A673 (cell line): ENCODE measurements at regions of chr3 and their contacts with region 1.

Region 1: GRCh38 chr3:27312044-27312668 is 57.0 kb downstream of the NEK10 start:
- DNase-seq: peak; percentile 72
- H3K4me3 ChIP-seq: no peak overlapping the region
- H3K27ac ChIP-seq: no peak overlapping the region
- H3K4me1 ChIP-seq: no peaks in the 10 kb centered on the region
- H3K27me3 ChIP-seq: no peaks in the 10 kb centered on the region
- CTCF ChIP-seq: peak; percentile 78

Region 2: DNA sequence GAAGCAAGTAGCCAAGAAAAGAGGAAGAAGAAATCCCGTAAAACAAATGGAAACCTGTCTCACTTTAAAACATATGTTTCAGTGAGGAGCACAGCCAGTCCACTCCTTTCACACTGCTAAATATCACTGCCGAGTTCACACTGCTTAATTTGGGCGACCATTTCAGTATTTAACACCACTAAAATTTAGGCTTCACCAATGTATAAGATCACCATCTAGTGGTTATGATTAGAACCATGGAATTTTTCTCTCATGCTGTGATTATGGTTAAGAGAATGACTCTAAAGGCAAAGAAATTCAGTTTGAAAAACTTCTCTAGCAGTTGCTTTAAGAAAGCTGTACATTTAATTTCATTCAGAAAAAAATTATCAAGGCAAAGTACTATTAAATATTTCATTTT is 155.4 kb after region 1 on chr3:
- CTCF ChIA-PET with region 1: no interaction called
- POLR2A ChIA-PET with region 1: no interaction called
- intact Hi-C with region 1: loop called (anchors 2 kb)
- DNase-seq: peak; percentile 78
- H3K4me3 ChIP-seq: no peak overlapping the region
- H3K27ac ChIP-seq: no peak overlapping the region
- H3K4me1 ChIP-seq: peaks cover 4% of the 10 kb centered on the region
- H3K27me3 ChIP-seq: no peaks in the 10 kb centered on the region
- CTCF ChIP-seq: peak; percentile 73

Region 3: GRCh38 chr3:27659279-27660021 is 347.3 kb after region 1 on chr3:
- CTCF ChIA-PET with region 1: no interaction called
- POLR2A ChIA-PET with region 1: no interaction called
- intact Hi-C with region 1: loop called (anchors 1 kb)
- DNase-seq: peak; percentile 61
- H3K4me3 ChIP-seq: no peak overlapping the region
- H3K27ac ChIP-seq: no peak overlapping the region
- H3K4me1 ChIP-seq: no peaks in the 10 kb centered on the region
- H3K27me3 ChIP-seq: no peaks in the 10 kb centered on the region
- CTCF ChIP-seq: peak; percentile 79

Region 4: DNA sequence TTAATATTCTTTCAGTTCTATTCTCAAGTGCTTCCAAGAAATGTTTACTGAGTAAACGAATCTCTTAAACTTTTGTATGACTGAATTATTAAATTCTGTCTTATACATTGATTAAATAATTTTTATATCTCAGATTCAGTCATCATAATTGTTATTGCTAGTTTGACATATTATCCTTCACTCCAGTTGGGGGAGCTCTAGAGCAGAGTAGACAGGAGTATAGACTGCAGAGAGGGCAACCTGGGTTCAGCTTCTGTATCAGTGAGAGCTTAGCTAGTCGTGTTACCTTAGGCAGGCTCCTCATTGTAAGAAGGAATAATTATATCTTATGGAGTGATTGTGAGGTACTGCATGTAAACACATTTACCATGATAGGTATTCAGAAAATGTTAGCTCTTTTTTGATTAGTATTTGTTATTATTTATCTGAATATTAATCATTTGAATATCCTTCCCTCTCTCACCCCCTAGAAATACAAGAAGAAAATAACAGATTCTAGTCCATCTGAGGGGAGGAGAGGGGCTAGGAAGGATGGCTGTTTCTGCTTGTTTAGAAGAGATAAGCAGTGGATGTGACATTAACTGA is 1005.4 kb after region 1 on chr3:
- CTCF ChIA-PET with region 1: no interaction called
- POLR2A ChIA-PET with region 1: no interaction called
- intact Hi-C with region 1: loop called (anchors 10 kb)
- DNase-seq: peak; percentile 71
- H3K4me3 ChIP-seq: no peak overlapping the region
- H3K27ac ChIP-seq: no peak overlapping the region
- H3K4me1 ChIP-seq: no peaks in the 10 kb centered on the region
- H3K27me3 ChIP-seq: no peaks in the 10 kb centered on the region
- CTCF ChIP-seq: peak; percentile 78